Ascending aorta (tissue), 2 donors: ENCODE measurements at regions of chr1 and their contacts with region 1.

Region 1: DNA sequence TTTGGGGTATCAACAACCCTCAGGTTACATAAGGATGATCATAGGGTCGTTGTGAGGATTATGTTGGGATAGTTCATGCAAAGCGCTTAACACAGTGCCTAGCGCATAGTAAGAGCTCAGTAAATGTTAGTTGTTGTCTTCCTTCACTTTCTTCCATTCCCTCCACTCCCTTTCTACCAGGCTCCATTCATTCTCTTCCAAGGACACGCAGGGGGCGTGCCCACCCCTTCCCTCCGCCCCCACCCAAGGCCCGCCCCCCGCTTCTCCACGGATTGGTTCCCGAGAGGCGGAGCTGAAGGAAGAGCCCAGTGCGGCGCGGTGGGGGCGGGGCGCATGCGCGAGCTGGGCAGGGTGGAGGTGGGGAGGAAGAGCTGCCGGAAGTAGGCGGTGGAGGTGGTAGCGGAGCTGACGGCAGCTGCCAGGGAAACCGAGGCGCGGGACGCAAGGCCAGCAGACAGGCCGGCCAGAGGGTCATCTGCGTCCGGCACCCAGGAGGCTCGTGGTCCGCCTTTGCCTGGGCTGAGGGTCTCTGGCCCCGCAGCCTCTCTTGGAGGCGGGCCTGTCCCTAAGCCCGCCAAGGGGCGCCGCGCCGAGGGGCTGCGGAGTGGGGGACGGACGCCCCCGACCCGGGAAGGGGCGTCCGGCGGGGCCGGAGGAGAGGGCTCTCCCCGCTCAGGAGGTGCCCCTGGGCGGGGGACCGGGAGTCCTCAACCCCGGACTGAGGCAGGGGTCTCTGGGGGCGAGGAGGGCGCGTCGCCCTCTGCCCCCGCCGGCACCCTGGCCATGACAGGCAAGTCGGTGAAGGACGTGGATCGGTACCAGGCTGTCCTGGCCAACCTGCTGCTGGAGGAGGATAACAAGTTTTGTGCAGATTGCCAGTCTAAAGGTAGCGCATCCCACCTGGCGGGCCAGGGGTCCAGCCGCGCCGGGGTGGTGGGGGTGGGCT is at the start of gene SMAP2:
- DNase-seq: peak; percentile 79 to 97
- H3K4me3 ChIP-seq: peak within 1 kb of the TSS; percentile 68 to 98
- H3K27ac ChIP-seq: peak within 1 kb of the TSS; percentile 75 to 84
- H3K4me1 ChIP-seq: peaks cover 0 to 3% of the 10 kb centered on the region in 2 donors
- H3K27me3 ChIP-seq: no peaks in the 10 kb centered on the region
- CTCF ChIP-seq: no peak
- total RNA-seq, gene SMAP2: 33.5 TPM

Region 2: GRCh38 chr1:40096977-40097782 is 276.4 kb before region 1 on chr1 and contains the start of gene PPT1:
- intact Hi-C with region 1: no loop called
- DNase-seq: peak in 1 of 2 donors; percentile 84
- H3K4me3 ChIP-seq: peak within 1 kb of the TSS; percentile 69 to 90
- H3K27ac ChIP-seq: peak within 1 kb of the TSS; percentile 49 to 63
- H3K4me1 ChIP-seq: no peaks in the 10 kb centered on the region
- H3K27me3 ChIP-seq: no peaks in the 10 kb centered on the region
- CTCF ChIP-seq: peak in 1 of 3 experiments; percentile 28
- total RNA-seq, gene PPT1: 84.2 TPM

Region 3: DNA sequence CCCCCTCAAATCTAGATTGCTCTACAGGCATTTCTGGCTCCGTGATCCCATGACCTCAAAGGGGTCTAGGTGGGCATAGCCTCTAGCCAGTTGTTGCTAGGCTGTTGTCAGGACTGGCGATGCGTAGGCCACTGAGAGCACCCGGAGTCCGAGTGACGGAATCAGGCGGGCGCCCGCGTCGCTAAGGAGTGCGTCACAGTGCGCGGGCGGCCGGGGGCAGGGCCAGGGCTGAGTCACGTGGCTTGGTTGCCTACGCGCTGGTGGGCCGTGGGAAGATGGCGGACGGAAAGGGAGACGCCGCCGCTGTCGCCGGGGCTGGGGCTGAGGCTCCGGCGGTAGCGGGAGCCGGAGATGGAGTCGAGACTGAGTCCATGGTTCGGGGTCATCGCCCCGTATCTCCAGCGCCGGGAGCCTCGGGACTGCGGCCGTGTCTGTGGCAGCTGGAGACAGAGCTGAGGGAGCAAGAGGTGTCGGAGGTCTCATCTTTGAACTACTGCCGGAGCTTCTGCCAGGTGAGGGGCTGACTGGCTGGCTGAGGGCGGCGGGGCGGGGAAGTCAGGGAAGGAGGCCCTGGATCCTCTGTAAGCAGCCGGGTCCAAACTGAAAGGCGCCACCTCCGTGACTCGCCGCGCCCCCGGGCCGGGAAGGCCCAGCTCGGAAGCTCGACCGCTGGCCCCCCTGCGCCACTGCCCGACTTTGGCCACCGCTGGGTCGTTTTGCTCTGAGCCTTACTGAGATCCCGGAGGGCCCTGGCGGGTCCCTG is 212.3 kb before region 1 on chr1 and contains the start of gene RLF:
- intact Hi-C with region 1: loop called (anchors 5 kb)
- DNase-seq: peak; percentile 72 to 97
- H3K4me3 ChIP-seq: peak within 1 kb of the TSS; percentile 84 to 94
- H3K27ac ChIP-seq: peak within 1 kb of the TSS; percentile 91 to 95
- H3K4me1 ChIP-seq: peaks cover 7 to 8% of the 10 kb centered on the region in 2 donors
- H3K27me3 ChIP-seq: no peaks in the 10 kb centered on the region
- CTCF ChIP-seq: peak in 1 of 3 experiments; percentile 16
- total RNA-seq, gene RLF: 7.1 TPM

Region 4: DNA sequence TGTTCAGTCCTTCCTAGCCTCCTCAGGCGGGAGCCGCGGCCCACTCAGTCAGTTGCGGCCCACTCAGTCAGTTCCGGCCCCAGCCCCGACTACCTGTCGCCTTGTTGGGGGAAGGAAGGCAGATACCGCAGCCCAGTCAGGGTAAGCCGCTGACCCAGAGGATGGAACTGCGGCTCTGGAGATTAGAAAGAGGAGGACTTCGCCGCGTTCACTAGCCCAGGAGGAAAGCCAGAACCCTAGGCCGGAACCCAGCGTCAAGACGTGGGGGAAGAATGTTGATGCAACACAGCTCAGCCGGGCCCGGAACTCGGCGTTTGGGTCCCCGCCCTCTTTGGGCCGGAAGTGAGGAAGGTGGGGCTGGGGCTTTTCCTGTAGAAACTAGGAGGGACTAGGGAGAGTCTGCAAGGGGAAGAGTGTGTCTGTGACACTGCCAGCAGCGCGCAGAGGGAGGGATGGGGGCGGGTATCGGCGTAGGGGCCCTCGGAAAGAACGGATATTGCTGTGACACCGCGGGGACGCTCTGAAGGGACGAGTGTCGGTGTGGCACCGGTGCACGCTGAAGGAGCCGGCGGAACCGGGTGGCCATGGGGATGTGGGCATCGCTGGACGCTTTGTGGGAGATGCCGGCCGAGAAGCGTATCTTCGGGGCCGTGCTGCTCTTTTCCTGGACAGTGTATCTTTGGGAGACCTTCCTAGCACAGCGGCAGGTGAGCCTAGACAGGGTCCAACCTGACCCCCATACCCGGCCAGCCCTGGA is 115.7 kb before region 1 on chr1 and contains the start of gene ZMPSTE24:
- intact Hi-C with region 1: loop called (anchors 2 kb)
- DNase-seq: peak; percentile 88 to 98
- H3K4me3 ChIP-seq: peak within 1 kb of the TSS; percentile 84
- H3K27ac ChIP-seq: peak within 1 kb of the TSS; percentile 90 to 98
- H3K4me1 ChIP-seq: peaks cover 8 to 34% of the 10 kb centered on the region in 2 donors
- H3K27me3 ChIP-seq: no peaks in the 10 kb centered on the region
- CTCF ChIP-seq: no peak
- total RNA-seq, gene ZMPSTE24: 61.8 TPM

Region 5: DNA sequence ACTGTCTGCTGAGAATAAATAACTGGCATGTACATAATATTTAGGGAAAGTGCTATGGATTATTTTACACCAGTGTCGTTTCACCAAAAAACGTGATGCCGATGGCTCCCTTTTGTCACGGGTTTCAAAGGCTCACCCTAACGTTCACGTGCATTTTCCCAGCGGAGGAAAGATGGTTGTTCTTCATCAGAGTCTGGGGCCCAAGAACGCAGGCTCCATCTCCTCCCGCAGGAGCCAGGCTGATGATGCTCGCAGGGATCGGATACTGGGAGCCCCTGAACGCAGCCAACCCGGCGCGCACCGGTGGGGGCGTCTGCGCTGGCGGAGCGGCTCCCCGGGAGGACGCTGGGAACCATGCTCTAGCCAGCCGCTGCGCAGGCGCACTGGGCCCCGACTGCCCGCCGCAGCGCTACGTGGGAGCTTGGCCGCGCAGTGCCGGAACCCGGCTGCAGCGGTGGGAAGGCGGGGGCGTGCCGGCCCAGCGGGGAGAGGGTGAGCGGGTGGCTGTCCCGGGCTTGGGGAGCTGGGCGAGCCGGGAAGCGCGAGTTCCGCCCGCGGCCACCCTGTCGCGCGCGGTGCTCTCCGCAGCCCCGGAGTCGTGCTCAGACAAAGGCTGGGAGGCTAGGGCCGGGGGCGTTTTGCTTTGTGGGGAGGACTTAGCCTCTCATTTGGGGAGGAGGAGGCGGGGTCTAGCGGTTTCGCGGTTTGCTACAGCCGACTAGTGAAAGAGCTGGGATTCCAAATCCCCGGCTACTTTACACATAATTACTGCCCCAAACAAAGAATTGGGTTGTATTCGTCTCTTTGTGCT is 76.3 kb after region 1 on chr1 and contains the start of gene ZFP69B:
- intact Hi-C with region 1: loop called (anchors 2 kb)
- DNase-seq: peak; percentile 56 to 93
- H3K4me3 ChIP-seq: peak within 1 kb of the TSS; percentile 59 to 83
- H3K27ac ChIP-seq: peak within 1 kb of the TSS; percentile 62 to 85
- H3K4me1 ChIP-seq: peaks cover 0 to 3% of the 10 kb centered on the region in 2 donors
- H3K27me3 ChIP-seq: no peaks in the 10 kb centered on the region
- CTCF ChIP-seq: peak in 1 of 3 experiments; percentile 16
- total RNA-seq, gene ZFP69B: 3.8 TPM

Region 6: GRCh38 chr1:41023279-41023990 is 649.8 kb after region 1 on chr1:
- intact Hi-C with region 1: no loop called
- DNase-seq: no peak
- H3K4me3 ChIP-seq: no peak overlapping the region
- H3K27ac ChIP-seq: peak overlapping the region in 1 of 2 donors; percentile 32
- H3K4me1 ChIP-seq: peaks cover 0 to 3% of the 10 kb centered on the region in 2 donors
- H3K27me3 ChIP-seq: no peaks in the 10 kb centered on the region
- CTCF ChIP-seq: peak in 2 of 3 experiments; percentile 23 to 33